A673 (cell line): ENCODE measurements at regions of chr1 and their contacts with region 1.

Region 1: GRCh38 chr1:232594768-232595698 is 34.9 kb downstream of the SIPA1L2 start:
- DNase-seq: no peak
- H3K4me3 ChIP-seq: no peak overlapping the region
- H3K27ac ChIP-seq: no peak overlapping the region
- H3K4me1 ChIP-seq: peaks cover 16% of the 10 kb centered on the region
- H3K27me3 ChIP-seq: no peaks in the 10 kb centered on the region
- CTCF ChIP-seq: no peak

Region 2: GRCh38 chr1:232538224-232538942 is 56.6 kb before region 1 on chr1:
- CTCF ChIA-PET with region 1: no interaction called
- POLR2A ChIA-PET with region 1: interaction called, 14 read pairs
- intact Hi-C with region 1: no loop called
- DNase-seq: peak; percentile 85
- H3K4me3 ChIP-seq: no peak overlapping the region
- H3K27ac ChIP-seq: no peak overlapping the region
- H3K4me1 ChIP-seq: peaks cover 20% of the 10 kb centered on the region
- H3K27me3 ChIP-seq: no peaks in the 10 kb centered on the region
- CTCF ChIP-seq: no peak